A549 (cell line): ENCODE measurements at regions of chr7 and their contacts with region 1.

Region 1: GRCh38 chr7:92421676-92422435 is 25.4 kb upstream of the GATAD1 start:
- DNase-seq: no peak
- ATAC-seq: no peak
- H3K4me3 ChIP-seq: no peak overlapping the region
- H3K27ac ChIP-seq: no peak overlapping the region
- H3K4me1 ChIP-seq: peaks cover 3% of the 10 kb centered on the region; the same call in 1 of the 3 replicates
- CTCF ChIP-seq: no peak
- EP300 ChIP-seq: no peak
- POLR2A ChIP-seq: no peak
- RAD21 ChIP-seq: no peak

Region 2: DNA sequence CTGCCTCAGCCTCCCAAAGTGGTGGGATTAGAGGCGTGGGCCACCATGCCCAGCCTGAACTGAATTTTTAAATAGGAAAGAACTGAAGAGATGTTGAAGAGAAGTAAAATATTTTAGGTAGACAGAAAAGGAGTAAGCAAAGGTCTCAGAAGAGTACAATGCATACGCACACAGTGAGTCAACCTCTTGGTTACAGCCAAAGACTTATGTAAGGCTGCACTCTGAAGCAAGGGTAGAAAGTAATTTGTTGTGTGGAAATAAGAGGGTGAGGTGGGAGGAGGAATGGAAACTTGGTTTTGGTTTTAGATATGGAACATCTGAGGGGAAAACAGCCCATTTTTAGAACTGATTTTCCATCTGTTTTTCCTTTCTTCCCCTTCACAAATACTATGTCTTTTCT is 193.8 kb before region 1 on chr7:
- CTCF ChIA-PET with region 1: no interaction called
- POLR2A ChIA-PET with region 1: no interaction called
- DNase-seq: no peak
- ATAC-seq: no peak
- H3K4me3 ChIP-seq: no peak overlapping the region
- H3K27ac ChIP-seq: no peak overlapping the region
- H3K4me1 ChIP-seq: no peaks in the 10 kb centered on the region
- CTCF ChIP-seq: no peak
- EP300 ChIP-seq: no peak
- POLR2A ChIP-seq: no peak
- RAD21 ChIP-seq: no peak

Region 3: DNA sequence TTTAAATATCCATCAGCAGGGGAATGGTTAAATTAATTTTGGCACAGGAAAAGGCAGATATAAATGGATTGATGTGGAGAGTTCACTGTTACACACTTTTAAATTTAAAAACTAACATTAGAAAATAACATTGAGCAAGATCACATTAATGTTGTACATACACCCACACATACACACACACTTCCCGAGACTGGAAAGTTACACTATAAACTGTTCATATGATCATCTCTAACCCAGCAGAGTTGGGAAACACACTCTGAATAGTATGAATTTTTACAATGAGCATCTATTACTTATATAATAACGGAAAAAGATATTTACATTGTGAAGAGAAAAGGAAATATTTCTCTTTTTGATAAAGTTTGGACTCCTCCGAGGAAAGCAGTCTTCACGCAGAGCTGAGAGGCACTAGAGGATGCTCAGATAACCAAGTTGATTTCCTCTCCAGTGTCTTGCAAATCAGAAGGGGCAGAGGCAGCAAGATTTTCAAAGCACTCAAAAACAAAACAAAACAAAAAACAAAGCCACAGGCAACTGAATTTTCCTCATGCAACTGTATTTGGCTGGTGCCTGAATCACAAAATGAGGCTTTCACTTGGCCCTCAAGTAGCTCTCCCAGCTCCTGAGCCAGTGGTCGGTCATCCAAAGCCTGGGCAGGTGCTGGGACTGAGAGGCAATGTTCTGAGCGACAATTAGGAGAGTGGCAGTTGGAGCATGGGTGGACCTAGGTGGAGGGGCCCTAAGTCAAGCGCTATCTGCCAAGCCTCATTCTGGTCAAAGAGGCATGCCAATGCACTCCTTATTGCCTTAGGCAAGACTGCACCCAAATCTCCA is 15.0 kb after region 1 on chr7:
- CTCF ChIA-PET with region 1: interaction called, 13 read pairs
- POLR2A ChIA-PET with region 1: no interaction called
- DNase-seq: no peak
- ATAC-seq: no peak; a peak in 1 of 6 replicates
- H3K4me3 ChIP-seq: no peak overlapping the region
- H3K27ac ChIP-seq: no peak overlapping the region
- H3K4me1 ChIP-seq: no peaks in the 10 kb centered on the region
- CTCF ChIP-seq: no peak
- EP300 ChIP-seq: no peak
- POLR2A ChIP-seq: no peak
- RAD21 ChIP-seq: no peak